Adrenal gland (tissue), 19 donors: ENCODE measurements at regions of chr5 and their contacts with region 1.

Region 1: DNA sequence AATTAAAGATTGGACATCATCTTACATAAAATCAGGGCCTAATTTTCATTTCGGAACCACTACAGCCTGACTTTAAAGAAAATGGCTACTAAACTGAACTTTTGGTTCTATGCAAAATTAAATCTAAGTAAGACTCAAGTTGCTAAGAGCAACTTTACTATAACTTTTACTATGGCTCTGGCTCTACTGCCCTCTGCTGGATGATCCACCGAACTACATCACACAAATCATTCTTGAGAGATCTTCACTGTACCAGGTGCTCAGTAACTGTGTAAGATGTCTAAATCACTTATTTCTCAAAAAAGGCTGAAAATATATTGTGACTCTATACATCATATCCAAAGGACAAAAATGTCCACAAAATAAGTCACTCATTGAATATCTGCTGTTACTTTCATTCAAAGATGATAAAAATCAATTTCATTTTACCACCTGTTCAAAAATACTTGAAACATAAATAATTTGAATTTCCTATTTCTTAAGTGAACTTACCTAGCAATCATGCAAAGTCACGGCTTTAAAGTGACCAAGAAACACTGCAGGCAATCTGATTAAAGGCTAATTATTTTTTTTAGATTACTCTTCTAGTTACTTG is 13.5 kb downstream of the MOCS2 start:
- DNase-seq: peak; percentile 47 to 89 (median 69)
- H3K4me3 ChIP-seq: no peak overlapping the region
- H3K27ac ChIP-seq: no peak overlapping the region
- H3K4me1 ChIP-seq: peaks cover 10 to 23% of the 10 kb centered on the region in 2 donors
- H3K27me3 ChIP-seq: no peaks in the 10 kb centered on the region
- CTCF ChIP-seq: peak; percentile 75 to 93 (median 90)
- POLR2A ChIP-seq: no peak

Region 2: DNA sequence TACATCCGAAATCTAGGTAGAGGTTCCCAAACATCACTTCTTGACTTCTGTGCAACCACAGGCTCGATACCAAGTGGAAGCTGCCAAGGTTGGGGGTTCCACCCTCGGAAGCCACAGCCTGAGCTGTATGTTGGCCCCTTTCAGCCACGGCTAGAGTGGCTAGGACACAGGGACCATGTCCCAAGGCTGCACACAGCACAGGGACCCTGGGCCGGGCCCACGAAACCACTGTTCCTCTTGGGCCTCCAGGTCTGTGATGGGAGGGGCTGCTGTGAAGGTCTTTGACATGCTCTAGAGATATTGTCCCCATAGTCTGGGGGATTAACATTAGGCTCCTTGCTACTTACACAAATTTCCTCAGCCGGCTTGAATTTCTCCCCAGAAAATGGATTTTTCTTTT is 1252.1 kb before region 1 on chr5:
- intact Hi-C with region 1: no loop called
- DNase-seq: no peak
- H3K4me3 ChIP-seq: no peak overlapping the region
- H3K27ac ChIP-seq: no peak overlapping the region
- H3K4me1 ChIP-seq: no peaks in the 10 kb centered on the region
- H3K27me3 ChIP-seq: no peaks in the 10 kb centered on the region
- CTCF ChIP-seq: no peak
- POLR2A ChIP-seq: no peak

Region 3: DNA sequence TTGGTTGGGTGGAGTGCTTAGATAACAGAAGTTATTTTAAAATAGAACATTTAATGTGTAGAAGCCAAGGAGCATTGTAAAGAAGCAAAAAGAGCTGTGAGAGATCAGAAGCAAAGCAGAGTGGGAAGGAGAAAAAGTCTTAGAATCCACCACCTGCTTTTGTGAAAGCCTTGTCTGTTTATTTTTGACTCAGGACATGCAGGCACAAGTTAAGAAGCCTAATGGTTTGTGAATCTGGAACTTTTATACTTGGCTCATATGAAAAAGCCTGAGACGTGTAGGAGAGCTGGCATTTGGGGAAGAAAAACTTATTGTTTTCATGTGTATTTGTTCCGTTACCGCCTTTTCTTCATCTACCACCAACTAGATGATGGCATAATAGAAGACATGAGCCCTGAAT is 145.3 kb before region 1 on chr5:
- intact Hi-C with region 1: loop called (anchors 5 kb)
- DNase-seq: no peak
- H3K4me3 ChIP-seq: no peak overlapping the region
- H3K27ac ChIP-seq: no peak overlapping the region
- H3K4me1 ChIP-seq: peaks cover 0 to 26% of the 10 kb centered on the region in 2 donors
- H3K27me3 ChIP-seq: no peaks in the 10 kb centered on the region
- CTCF ChIP-seq: no peak
- POLR2A ChIP-seq: no peak